Activated T-helper 1 cell treated with anti-CD3 and anti-CD28 coated beads, Interleukin-12 subunit alpha, Interleukin-12 subunit beta, Interleukin-2, Interleukin-4 antibody, amounts not matched to agents 30 ng/mL and 10 ng/mL and 1 ng/mL, durations not matched to agents 14 hours and 24 hours and 36 hours (primary cell): ENCODE measurements at regions of chr12 and their contacts with region 1.

Region 1: GRCh38 chr12:4857472-4858291 is 52.0 kb upstream of the KCNA1 start:
- DNase-seq: peak; percentile 63
- H3K4me3 Mint-ChIP-seq: peak overlapping the region; percentile 38
- H3K27ac Mint-ChIP-seq: no peak overlapping the region
- H3K4me1 Mint-ChIP-seq: peaks cover 31% of the 10 kb centered on the region
- H3K27me3 Mint-ChIP-seq: peaks cover 29% of the 10 kb centered on the region

Region 2: DNA sequence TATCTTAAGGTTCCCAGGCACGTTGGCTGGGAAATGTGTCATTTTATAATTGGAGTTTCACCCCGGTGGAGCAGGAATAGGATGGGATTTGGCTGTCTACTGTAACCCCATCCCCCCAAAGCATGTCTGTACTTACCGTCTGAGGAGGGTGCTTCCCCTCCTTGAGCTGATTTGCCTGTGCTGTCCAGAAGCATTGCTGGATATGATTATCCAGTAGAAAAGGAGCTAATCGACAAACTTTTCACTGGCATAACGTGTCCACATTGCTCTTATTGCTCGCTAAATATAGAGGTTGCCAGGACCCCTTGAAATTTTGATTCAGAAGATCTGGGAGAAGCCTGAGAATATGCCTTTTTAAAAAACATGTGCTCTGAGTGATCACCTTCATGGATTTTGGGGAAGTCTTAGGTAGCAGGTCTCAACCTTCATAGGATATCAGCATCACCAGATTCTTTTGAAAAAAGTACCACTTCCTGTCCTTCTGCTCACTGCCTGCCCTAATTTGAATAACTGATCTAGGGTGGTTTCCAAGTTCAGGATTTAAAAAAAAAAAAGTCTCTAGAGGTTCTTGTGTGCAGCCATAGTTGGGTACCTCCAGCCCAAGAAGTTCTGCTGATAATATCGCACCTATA is 28.4 kb before region 1 on chr12:
- intact Hi-C with region 1: loop called (anchors 2 kb)
- DNase-seq: no peak
- H3K4me3 Mint-ChIP-seq: peak overlapping the region; percentile 83
- H3K27ac Mint-ChIP-seq: peak overlapping the region; percentile 99
- H3K4me1 Mint-ChIP-seq: peaks cover 71% of the 10 kb centered on the region
- H3K27me3 Mint-ChIP-seq: no peaks in the 10 kb centered on the region

Region 3: DNA sequence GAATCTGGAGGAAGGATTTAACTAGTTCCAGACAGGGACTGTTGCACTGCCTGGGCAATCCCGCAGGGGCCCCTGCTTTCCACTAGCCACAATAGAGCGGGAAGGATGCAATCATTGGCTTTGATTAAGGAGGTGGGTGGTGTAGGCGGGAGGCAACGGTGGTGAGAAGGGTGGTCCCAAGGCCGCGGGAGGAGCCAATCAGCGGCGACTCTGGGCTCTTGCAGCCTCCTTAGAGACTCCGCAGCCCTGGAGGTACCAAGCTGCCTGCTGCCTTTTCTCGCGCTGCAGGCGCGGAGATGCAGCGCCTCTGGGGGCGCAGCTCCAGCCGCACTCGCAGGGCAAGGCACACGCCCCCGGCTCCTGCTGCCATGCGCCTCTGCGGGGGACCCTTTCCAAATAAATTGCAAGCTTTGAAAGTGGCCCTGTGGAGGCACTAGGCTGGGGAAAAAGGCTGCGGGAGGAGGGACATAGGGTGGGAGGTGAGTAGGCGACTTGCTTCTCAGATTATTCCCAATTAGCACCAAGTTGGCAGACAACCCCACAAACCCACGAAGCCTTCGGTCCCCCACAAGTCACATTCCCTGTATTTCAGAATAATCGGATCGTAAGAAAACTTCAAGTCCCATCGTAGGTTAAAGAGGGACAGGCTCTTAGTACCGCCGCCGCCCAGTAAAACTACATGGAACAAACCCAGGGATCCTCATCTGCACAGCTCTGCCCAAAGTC is 51.2 kb after region 1 on chr12:
- intact Hi-C with region 1: loop called (anchors 5 kb)
- DNase-seq: no peak
- H3K4me3 Mint-ChIP-seq: peak overlapping the region; percentile 50
- H3K27ac Mint-ChIP-seq: no peak overlapping the region
- H3K4me1 Mint-ChIP-seq: peaks cover 14% of the 10 kb centered on the region
- H3K27me3 Mint-ChIP-seq: peaks cover 38% of the 10 kb centered on the region

Region 4: GRCh38 chr12:5003020-5003666 is 145.5 kb after region 1 on chr12:
- intact Hi-C with region 1: loop called (anchors 1 kb)
- DNase-seq: peak; percentile 26
- H3K4me3 Mint-ChIP-seq: no peak overlapping the region
- H3K27ac Mint-ChIP-seq: no peak overlapping the region
- H3K4me1 Mint-ChIP-seq: no peaks in the 10 kb centered on the region
- H3K27me3 Mint-ChIP-seq: peaks cover 15% of the 10 kb centered on the region

Region 5: DNA sequence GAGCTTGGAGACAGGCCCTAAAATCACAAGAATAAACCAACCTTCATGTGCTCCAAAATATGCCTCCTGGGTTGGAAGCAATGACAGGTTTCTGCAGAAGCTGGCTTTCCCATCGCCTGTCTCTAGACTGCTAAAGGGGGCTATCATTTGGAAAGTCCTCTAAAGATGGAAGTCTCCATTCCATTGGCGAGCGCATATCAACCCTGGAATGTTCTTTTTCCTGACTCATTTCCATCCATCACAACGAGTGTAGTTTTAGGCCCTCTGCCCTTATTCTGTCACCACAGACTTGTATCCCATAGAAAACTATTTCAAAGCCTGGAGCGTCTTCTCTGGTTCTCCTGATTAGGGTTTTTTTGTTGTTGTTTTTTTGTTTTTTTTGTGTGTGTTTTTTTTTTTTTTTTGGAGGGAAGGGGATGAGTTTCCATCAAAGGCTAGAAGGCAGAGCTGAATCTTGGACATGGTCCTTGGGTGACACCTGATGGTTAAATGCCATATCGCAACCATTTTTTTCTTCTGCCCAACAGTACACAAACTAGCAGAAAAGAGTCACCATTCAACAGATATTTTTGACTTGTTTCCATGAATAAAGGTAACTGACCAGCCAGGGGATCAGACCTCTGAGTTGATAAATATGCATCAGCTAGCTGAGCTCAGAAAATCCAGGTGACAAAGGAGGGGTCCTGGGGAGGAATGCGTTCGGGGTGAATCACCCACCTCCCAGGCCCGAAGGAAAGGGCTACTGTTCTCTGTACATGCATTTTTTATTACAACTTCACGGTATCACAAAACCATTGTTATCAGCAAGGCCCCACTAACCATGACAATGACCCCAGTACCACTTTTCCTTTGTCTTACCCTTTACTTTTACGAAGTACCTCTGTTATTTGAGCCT is 226.5 kb after region 1 on chr12:
- intact Hi-C with region 1: loop called (anchors 1 kb)
- DNase-seq: no peak
- H3K4me3 Mint-ChIP-seq: no peak overlapping the region
- H3K27ac Mint-ChIP-seq: no peak overlapping the region
- H3K4me1 Mint-ChIP-seq: no peaks in the 10 kb centered on the region
- H3K27me3 Mint-ChIP-seq: peaks cover 5% of the 10 kb centered on the region